Panc1 (cell line): ENCODE measurements at regions of chr14 and their contacts with region 1.

Region 1: DNA sequence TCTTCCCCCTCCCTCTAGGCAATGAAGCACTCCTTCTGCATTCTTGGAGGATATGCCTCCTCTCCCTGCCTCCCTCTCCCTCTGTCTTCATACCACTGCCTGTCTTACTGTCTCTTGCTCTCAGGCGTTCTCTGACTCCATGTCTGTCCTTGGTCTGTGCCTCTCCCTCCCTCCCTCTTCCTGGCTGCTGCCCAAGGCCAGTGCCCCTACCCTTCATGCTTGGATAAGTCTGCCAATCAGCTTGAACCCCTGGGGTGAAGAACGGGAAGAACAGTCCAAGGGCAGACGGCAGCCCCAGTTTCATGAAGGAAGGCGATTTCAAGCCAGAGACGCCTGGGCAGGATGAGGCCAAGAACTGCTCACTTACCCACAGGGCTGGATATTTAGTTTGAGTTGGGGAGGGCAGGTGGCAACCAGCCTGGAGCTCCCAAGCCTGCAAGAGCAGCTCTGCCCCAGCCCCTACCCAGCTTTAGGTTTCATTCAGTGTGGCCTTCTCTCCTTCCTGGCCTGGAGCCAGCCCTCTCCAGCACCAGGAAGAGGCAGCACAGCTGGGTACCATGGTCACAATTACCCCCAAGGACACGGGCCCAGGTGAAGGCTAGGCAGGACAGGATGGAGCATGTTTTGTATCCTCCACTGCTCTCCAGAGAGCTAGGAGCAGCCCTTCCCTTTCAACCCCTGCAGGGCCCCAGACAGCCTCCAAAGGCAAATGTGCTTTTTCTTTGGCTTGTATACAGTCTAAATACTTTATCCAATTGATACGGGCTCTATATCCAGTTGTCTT is 35.8 kb upstream of the LTBP2 start:
- DNase-seq: no peak
- ATAC-seq: peak; percentile 33
- H3K4me3 ChIP-seq: no peak overlapping the region
- H3K27ac ChIP-seq: peak overlapping the region; percentile 34
- H3K4me1 ChIP-seq: peaks cover 21% of the 10 kb centered on the region
- H3K27me3 ChIP-seq: no peaks in the 10 kb centered on the region
- CTCF ChIP-seq: no peak

Region 2: GRCh38 chr14:74084277-74085046 is 563.4 kb before region 1 on chr14 and contains the starts of genes ALDH6A1 and LIN52:
- CTCF ChIA-PET with region 1: no interaction called
- POLR2A ChIA-PET with region 1: interaction called, 15 read pairs
- in situ Hi-C with region 1: no loop called
- intact Hi-C with region 1: no loop called
- DNase-seq: peak; percentile 98
- ATAC-seq: peak; percentile 97
- H3K4me3 ChIP-seq: peak within 1 kb of the TSS; percentile 94 to 98
- H3K27ac ChIP-seq: peak within 1 kb of the TSS; percentile 93
- H3K4me1 ChIP-seq: peaks cover 7% of the 10 kb centered on the region; the same call in 1 of the 2 replicates
- H3K27me3 ChIP-seq: no peaks in the 10 kb centered on the region
- CTCF ChIP-seq: no peak
- total RNA-seq, gene ALDH6A1: 2.1 TPM
- total RNA-seq, gene LIN52: 6.7 TPM

Region 3: DNA sequence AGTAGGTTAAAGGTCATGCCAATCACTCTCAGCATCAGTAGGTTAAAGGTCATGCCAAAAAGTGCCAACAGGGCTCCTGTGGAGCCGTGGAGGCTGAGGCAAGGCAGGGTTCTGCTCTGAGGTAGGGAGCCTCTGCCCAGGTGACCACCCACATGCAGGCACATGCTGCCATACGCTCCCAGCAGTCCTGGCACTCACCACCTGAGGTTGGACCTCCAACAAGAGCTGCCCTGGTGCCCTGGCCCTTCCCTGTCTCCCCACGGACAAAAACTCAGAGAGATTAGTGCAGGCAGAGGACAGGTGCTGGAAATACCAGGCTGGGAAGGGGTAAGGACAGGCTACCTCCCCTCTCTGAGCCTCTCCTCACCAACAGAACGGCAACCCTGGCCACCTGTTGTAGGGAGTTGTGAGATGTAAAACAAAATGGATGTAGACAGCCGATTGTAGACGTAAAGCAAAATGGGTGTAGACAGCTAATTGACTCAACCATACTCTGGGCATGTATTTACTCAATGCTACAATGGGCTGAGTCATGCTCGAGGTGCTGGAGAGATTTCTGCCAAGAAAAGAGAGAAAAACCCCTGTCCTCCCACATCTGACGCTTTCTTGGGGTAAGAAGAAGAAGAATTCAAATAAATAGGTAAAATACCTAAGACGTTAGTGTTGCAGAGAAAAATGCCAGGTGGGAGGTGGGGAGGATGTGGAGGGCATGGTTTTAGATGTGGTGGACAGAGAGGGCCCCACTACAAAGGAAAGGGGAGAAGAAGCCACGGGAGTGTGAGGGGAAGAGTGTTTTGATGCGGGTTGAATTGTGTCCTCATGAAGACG is 68.2 kb before region 1 on chr14:
- CTCF ChIA-PET with region 1: no interaction called
- POLR2A ChIA-PET with region 1: no interaction called
- in situ Hi-C with region 1: no loop called
- intact Hi-C with region 1: no loop called
- DNase-seq: no peak
- ATAC-seq: peak; percentile 57; the same call in 1 of the 2 replicates
- H3K4me3 ChIP-seq: no peak overlapping the region
- H3K27ac ChIP-seq: no peak overlapping the region
- H3K4me1 ChIP-seq: peaks cover 6% of the 10 kb centered on the region
- H3K27me3 ChIP-seq: no peaks in the 10 kb centered on the region
- CTCF ChIP-seq: no peak

Region 4: GRCh38 chr14:74711651-74712050 is 63.8 kb after region 1 on chr14:
- CTCF ChIA-PET with region 1: no interaction called
- POLR2A ChIA-PET with region 1: interaction called, 10 read pairs
- in situ Hi-C with region 1: no loop called
- intact Hi-C with region 1: no loop called
- DNase-seq: no peak
- ATAC-seq: no peak
- H3K4me3 ChIP-seq: peak overlapping the region; percentile 99
- H3K27ac ChIP-seq: peak overlapping the region; percentile 97
- H3K4me1 ChIP-seq: peaks cover 7% of the 10 kb centered on the region; the same call in 1 of the 2 replicates
- H3K27me3 ChIP-seq: no peaks in the 10 kb centered on the region
- CTCF ChIP-seq: no peak